Calu3 (cell line): ENCODE measurements at regions of chr5 and their contacts with region 1.

Region 1: GRCh38 chr5:110899566-110900412 is 161.0 kb downstream of the SLC25A46 start:
- DNase-seq: no peak
- H3K4me3 Mint-ChIP-seq: no peak overlapping the region
- H3K27ac Mint-ChIP-seq: no peak overlapping the region
- H3K4me1 Mint-ChIP-seq: peaks cover 16% of the 10 kb centered on the region
- H3K27me3 Mint-ChIP-seq: no peaks in the 10 kb centered on the region
- CTCF ChIP-seq: no peak

Region 2: DNA sequence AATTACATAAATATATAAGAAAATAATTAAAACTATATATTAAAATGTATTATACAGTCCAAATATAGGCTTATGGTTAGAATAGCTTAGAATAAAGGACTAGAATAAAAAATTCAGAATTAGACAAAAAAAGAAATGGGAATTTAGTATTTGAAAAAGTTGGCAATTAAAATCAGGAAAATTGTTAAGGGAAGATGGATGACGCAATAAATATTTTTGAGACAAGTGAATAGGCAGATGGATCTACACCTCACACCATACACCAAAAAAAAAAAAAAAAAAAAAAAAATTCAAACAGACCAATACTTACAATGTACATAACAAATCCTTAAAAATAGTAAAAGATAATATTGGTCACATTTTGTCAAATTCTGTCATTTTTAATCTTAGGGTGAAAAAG is 374.0 kb before region 1 on chr5:
- CTCF ChIA-PET with region 1: no interaction called
- intact Hi-C with region 1: no loop called
- DNase-seq: no peak
- H3K4me3 Mint-ChIP-seq: no peak overlapping the region
- H3K27ac Mint-ChIP-seq: no peak overlapping the region
- H3K4me1 Mint-ChIP-seq: no peaks in the 10 kb centered on the region
- H3K27me3 Mint-ChIP-seq: no peaks in the 10 kb centered on the region
- CTCF ChIP-seq: no peak

Region 3: DNA sequence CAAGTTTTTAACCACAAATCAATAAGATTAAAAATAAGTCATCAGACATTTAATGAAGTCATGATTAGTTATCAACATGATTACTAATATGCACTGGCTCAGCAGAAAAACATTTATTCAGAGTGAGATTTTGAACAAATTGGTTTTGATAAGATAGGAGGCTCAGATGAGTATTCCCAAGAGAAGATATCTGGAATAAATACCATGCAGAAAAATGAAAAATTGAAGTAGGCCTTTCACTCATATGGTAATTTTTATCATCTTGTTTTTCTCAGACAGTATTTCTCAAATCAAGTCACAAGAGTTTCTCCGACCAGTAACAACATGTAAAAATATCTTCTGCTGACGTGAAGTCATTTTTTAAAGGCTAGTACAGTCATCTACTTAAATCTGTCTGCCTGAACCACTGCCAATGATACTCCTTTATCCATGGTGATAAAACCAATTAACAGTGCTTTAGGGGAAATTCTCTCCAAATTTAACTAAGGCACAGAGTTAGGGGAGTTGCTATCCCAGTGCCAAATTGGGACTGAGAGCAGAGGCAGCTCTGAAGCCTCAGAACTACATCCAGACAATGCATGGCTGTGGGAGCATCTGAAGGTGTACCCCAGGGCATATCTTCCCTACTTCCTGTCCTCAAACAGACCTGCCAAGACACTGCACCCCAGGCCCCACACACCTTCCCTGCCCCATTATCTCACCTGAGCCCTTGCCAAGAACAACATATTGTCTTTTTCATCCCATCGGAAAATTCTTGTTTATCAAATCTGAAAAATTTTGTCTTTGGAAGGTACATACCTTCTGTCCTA is 66.2 kb after region 1 on chr5:
- CTCF ChIA-PET with region 1: no interaction called
- intact Hi-C with region 1: loop called (anchors 5 kb)
- DNase-seq: no peak
- H3K4me3 Mint-ChIP-seq: no peak overlapping the region
- H3K27ac Mint-ChIP-seq: no peak overlapping the region
- H3K4me1 Mint-ChIP-seq: peaks cover 39% of the 10 kb centered on the region
- H3K27me3 Mint-ChIP-seq: no peaks in the 10 kb centered on the region
- CTCF ChIP-seq: no peak

Region 4: DNA sequence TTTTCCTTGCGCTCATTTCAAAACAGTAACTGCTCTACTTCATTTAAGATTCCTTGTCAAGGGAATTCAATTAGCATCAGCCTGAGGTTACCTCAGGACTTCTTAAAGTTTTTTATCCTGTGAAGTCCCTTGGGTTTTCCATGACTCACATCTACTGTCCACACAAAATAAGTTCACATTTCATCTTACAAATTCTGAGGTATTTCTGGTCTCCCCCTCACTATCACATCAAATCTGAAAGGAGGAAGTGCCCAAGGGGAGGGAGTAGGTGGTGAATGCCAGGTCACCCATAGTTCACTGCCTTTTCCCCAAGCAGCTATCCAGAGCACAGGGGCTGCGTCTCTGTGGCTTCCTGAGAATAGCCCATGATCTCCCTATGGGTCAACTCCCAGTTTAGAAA is 1084.3 kb after region 1 on chr5:
- CTCF ChIA-PET with region 1: no interaction called
- intact Hi-C with region 1: no loop called
- DNase-seq: peak; percentile 10
- H3K4me3 Mint-ChIP-seq: no peak overlapping the region
- H3K27ac Mint-ChIP-seq: no peak overlapping the region
- H3K4me1 Mint-ChIP-seq: peaks cover 8% of the 10 kb centered on the region
- H3K27me3 Mint-ChIP-seq: no peaks in the 10 kb centered on the region
- CTCF ChIP-seq: no peak